CD14-positive monocyte (primary cell): ENCODE measurements at regions of chr19 and their contacts with region 1.

Region 1: DNA sequence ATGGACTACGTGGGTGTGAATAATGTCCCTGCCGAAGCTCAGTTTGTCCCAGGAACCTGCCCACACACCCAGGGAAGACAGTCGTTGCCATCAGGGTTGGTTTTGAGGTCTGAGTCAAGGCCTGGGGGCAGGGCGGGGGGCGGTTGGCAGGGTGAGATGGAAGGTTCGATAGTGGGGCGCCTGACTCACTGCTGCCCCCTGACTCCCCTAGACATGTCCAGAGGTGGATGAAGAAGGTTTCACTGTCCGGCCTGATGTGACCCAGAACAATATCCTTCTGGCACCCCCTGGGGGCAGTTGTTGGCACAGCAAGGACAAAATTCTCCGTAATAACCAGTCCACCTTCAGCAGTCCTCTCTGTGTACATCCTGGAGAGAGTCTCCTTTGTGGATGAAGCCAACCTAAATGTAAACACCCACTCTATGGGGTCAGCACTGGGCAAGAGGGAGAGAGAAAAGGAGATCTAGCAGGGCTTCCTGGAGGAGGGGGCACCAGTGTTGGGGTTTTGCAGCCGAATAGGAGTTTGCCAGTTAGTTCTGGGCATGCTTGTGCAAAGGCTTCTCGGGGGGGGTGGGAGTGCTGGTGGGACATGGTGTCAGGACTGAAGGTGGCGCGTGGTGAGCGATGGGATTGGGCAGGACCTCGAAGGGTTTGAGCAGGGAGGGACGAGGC is 19.6 kb upstream of the B3GNT3 start:
- DNase-seq: peak in 1 of 3 donors; percentile 40
- H3K4me3 ChIP-seq: no peak overlapping the region
- H3K4me3 Mint-ChIP-seq: no peak overlapping the region
- H3K27ac ChIP-seq: no peak overlapping the region
- H3K27ac Mint-ChIP-seq: peak overlapping the region in 3 of 7 donors; percentile 15 to 54 (median 52)
- H3K4me1 ChIP-seq: peaks cover 14 to 23% of the 10 kb centered on the region in 2 donors
- H3K4me1 Mint-ChIP-seq: peaks cover 23% of the 10 kb centered on the region
- H3K27me3 ChIP-seq: no peaks in the 10 kb centered on the region
- H3K27me3 Mint-ChIP-seq: peaks cover 0 to 2% (median 0%) of the 10 kb centered on the region in 3 donors
- CTCF ChIP-seq: peak; percentile 76

Region 2: DNA sequence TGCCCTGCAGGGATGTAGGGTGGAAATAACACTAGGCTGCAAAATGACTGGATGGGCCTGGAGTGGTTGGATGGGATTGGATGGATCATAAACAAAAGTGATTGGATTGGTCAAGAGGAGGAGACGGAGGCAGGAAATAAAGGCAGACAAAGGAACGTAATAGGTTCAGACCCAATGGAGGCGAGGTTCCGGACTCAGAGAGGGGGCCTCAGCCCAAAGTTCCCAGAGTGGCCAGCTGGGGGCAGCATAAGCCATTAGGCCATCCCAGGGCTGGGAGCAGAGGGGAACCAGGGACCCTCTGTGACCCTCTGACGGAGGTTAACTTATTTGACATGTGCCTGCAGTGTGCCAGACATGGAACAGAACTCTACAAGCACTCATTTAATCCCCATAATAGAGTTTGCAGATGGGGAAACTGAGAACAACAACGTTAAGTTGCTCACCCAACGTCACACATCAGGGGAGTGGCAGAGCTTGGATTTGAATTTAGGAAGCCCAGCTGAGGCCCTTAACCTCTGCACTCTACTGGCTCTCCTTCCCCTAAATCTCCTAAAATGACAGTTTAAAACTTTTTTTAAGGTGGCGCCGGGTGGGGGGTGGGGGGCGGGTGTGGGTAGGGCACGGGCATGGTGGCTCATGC is 71.4 kb before region 1 on chr19:
- intact Hi-C with region 1: loop called in 1 of 2 experiments (anchors 5 kb)
- DNase-seq: peak; percentile 50 to 72 (median 68)
- H3K4me3 ChIP-seq: no peak overlapping the region
- H3K4me3 Mint-ChIP-seq: no peak overlapping the region
- H3K27ac ChIP-seq: no peak overlapping the region
- H3K27ac Mint-ChIP-seq: no peak overlapping the region
- H3K4me1 ChIP-seq: no peaks in the 10 kb centered on the region
- H3K4me1 Mint-ChIP-seq: peaks cover 8% of the 10 kb centered on the region
- H3K27me3 ChIP-seq: no peaks in the 10 kb centered on the region
- H3K27me3 Mint-ChIP-seq: peaks cover 8 to 16% (median 11%) of the 10 kb centered on the region in 3 donors
- CTCF ChIP-seq: peak; percentile 95